Calu3 (cell line): ENCODE measurements at regions of chr5 and their contacts with region 1.

Region 1: DNA sequence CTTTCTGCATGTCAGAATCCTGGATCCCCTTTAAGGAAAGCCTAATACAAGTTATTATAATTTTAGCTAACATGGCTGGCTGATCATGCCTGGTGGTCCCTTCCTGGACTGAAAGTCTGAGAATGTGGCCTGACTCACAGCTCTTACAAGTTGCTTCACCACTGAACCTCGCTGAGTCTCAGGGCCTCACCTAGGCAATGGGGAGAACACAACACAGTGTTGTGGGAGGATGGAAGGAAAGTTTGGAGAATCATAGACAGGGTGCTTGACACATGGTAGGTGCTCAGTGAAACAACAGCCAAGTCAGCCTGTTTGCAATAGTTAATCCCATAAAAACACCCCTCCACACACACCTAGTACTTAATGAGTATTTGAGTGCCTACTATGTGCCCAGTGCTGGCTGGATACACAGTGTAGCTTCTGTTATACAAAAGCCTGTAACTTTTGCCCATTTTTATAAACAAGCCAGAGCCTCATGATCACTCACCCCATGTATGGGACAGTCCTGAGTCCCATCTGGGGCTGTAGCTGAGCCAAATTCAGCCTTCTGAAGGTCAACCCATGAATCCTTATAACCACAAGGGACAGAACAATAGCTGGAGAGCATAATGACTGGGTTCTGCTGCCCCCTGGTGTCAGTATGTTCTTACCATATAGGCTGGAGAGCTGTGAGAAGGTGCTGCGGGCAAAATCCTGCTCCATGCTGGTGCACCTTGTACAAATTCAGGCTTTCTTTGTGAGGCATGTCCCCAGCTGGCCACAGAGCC is 3.9 kb downstream of the ACSL6 start:
- DNase-seq: peak; percentile 91
- H3K4me3 Mint-ChIP-seq: no peak overlapping the region
- H3K27ac Mint-ChIP-seq: no peak overlapping the region
- H3K4me1 Mint-ChIP-seq: peaks cover 4% of the 10 kb centered on the region
- H3K27me3 Mint-ChIP-seq: peaks cover 29% of the 10 kb centered on the region
- CTCF ChIP-seq: peak; percentile 81

Region 2: DNA sequence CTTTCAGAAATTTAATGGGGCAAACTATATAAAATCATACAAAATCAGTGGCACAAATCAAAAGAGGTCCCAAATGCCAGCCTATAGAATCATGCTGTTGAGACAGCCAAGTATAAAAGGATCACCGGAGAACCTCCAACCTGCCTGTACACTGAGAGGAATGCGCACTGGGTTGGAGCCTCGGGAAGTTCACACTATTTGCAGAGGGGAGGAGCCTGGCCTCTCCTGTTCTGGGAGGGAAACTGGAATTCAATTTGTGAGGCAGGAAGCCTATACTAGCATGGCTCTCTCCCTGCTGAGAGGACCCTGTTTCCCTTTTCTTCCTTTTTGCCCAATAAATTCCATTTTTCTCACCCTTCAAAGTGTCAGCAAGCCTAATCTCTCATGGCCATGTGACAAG is 1248.5 kb before region 1 on chr5:
- CTCF ChIA-PET with region 1: no interaction called
- intact Hi-C with region 1: loop called (anchors 10 kb)
- DNase-seq: no peak
- H3K4me3 Mint-ChIP-seq: no peak overlapping the region
- H3K27ac Mint-ChIP-seq: no peak overlapping the region
- H3K4me1 Mint-ChIP-seq: no peaks in the 10 kb centered on the region
- H3K27me3 Mint-ChIP-seq: no peaks in the 10 kb centered on the region
- CTCF ChIP-seq: no peak

Region 3: GRCh38 chr5:131423056-131423455 is 584.5 kb before region 1 on chr5:
- CTCF ChIA-PET with region 1: interaction called, 10 read pairs
- intact Hi-C with region 1: loop called (anchors 1 kb)
- DNase-seq: no peak
- H3K4me3 Mint-ChIP-seq: no peak overlapping the region
- H3K27ac Mint-ChIP-seq: no peak overlapping the region
- H3K4me1 Mint-ChIP-seq: no peaks in the 10 kb centered on the region
- H3K27me3 Mint-ChIP-seq: no peaks in the 10 kb centered on the region
- CTCF ChIP-seq: peak; percentile 54

Region 4: DNA sequence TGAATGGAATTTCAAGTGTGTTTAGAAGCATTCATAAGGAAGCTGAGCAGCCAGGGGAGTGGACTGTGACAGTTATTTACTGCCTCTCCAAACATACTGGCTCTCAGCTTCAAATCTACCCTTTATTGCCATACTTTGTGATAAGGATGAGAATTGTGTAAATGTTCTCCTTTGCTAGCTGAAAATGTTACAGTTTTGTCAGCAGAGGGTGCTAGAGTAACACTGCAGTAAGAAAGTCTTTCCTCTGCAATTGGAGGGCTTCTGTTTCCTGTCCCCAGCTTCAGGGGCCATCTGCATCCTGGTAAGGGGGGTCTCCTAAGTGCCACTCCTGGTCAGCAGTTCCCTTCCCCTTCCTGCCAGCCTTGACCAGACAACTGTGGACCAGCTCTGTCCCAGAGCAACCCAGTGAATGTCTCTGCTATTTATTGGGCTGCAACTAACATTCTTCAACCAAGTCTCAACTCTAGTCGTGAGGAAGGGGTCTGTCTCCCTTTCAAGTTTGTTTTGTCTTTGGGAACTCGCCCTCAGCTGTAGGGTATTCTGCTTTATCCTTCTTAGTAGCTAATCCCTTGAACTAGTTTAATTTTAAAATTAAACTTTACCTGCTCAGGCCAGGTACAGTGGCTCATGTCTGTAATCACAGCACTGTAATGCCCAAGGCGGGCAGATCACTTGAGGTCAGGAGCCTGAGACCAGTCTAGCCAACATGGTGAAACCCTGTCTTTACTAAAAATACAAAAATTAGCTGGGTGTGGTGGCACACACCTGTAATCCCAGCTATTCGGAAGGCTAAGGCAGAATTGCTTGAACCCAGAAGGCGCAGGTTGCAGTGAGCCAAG is 417.9 kb before region 1 on chr5:
- CTCF ChIA-PET with region 1: interaction called, 23 read pairs
- intact Hi-C with region 1: loop called (anchors 1 kb)
- DNase-seq: peak; percentile 30
- H3K4me3 Mint-ChIP-seq: no peak overlapping the region
- H3K27ac Mint-ChIP-seq: no peak overlapping the region
- H3K4me1 Mint-ChIP-seq: peaks cover 24% of the 10 kb centered on the region
- H3K27me3 Mint-ChIP-seq: no peaks in the 10 kb centered on the region
- CTCF ChIP-seq: peak; percentile 86

Region 5: DNA sequence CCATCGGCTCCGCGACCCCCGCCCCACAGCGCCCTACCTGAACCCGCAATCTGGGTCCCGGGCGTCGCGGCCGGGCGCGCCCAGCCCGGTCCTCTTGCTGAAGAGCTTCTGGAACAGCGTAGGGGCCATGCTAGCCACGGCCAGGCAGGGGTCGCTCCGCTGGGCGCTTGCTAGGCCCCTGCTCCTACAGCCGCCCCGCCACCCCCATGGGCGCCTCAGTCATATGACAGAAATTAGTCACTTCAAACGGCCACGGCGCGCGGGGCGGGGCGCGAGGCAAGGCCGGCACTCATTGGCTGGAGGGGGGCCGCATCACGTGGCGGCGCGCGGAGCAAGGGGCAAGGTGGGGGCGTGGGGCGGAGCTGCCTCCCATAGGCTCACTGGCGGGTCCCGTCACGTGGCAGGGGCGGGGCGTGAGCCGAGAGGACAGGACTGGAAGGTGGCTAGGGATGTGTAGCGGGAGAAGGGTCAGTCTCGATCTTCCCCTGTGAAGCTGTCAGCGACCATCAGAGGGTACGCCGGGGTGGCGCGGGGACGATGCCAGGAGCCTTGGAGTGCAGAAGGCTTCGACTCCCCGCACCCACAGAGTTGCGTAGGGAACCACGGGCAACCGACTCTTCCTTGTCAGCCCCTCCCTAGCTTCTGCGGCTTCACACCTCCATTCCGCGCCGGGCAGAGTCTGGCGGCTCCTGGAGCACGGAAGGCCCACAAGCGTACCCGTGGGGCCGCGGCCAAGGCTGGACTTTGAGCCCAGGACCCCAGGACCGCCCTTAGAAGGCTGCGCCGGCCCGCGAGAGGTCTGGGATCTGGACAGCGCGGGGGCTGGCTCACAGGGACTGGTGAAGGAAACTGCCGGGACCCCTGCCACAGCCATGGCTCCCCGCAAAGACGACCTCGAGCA is 210.5 kb before region 1 on chr5 and contains the start of gene FNIP1:
- CTCF ChIA-PET with region 1: interaction called, 7 read pairs
- intact Hi-C with region 1: loop called (anchors 5 kb)
- DNase-seq: peak; percentile 100
- H3K4me3 Mint-ChIP-seq: peak within 1 kb of the TSS; percentile 95
- H3K27ac Mint-ChIP-seq: peak within 1 kb of the TSS; percentile 94
- H3K4me1 Mint-ChIP-seq: peaks cover 9% of the 10 kb centered on the region
- H3K27me3 Mint-ChIP-seq: no peaks in the 10 kb centered on the region
- CTCF ChIP-seq: no peak
- total RNA-seq, gene FNIP1: 46.0 and 46.5 TPM in 2 replicates

Region 6: GRCh38 chr5:131810510-131811249 is 196.9 kb before region 1 on chr5:
- CTCF ChIA-PET with region 1: interaction called, 19 read pairs
- intact Hi-C with region 1: loop called (anchors 1 kb)
- DNase-seq: peak; percentile 19
- H3K4me3 Mint-ChIP-seq: no peak overlapping the region
- H3K27ac Mint-ChIP-seq: no peak overlapping the region
- H3K4me1 Mint-ChIP-seq: peaks cover 10% of the 10 kb centered on the region
- H3K27me3 Mint-ChIP-seq: no peaks in the 10 kb centered on the region
- CTCF ChIP-seq: no peak

Region 7: GRCh38 chr5:131996207-131997025 is 11.2 kb before region 1 on chr5:
- CTCF ChIA-PET with region 1: interaction called, 10 read pairs
- intact Hi-C with region 1: no loop called
- DNase-seq: no peak
- H3K4me3 Mint-ChIP-seq: no peak overlapping the region
- H3K27ac Mint-ChIP-seq: peak overlapping the region; percentile 59
- H3K4me1 Mint-ChIP-seq: peaks cover 29% of the 10 kb centered on the region
- H3K27me3 Mint-ChIP-seq: peaks cover 27% of the 10 kb centered on the region
- CTCF ChIP-seq: no peak

Region 8: GRCh38 chr5:132064738-132065331 is 57.3 kb after region 1 on chr5:
- CTCF ChIA-PET with region 1: no interaction called
- intact Hi-C with region 1: no loop called
- DNase-seq: peak; percentile 90
- H3K4me3 Mint-ChIP-seq: no peak overlapping the region
- H3K27ac Mint-ChIP-seq: no peak overlapping the region
- H3K4me1 Mint-ChIP-seq: no peaks in the 10 kb centered on the region
- H3K27me3 Mint-ChIP-seq: no peaks in the 10 kb centered on the region
- CTCF ChIP-seq: peak; percentile 95

Region 9: DNA sequence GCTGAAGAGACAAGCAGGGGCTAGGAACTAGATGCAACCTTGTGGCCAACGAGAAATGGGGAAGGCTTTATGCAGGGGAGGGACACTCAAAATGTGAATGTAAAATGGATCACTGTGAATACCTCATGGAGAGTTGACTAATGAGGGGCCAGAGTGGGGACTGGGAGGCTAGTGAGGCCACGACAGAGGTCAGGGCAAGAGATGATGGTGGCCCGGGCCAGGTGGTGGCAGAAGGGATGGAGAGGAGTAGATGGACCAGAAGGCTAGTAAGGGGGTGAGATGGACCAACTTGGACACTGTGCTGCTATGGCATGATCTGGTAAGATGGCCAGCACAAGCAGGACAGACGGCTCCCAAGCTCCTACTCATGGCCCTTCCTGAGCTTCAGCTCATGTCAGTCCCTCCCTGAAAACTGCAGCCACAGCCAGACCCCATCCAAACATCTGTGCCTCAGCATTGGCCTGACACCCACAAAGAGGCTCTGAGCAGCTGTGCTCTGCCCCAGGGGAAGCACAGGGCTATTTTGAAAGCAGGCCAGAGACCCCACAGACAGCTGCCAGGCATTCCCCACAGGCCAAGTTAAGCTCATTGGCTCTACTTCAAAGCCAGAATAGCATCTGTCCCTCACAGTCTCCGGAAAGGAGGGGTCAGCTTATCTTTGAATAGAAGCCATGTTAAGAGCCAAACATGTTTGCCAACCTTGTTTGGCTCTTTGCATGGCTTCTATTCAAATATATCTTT is 198.0 kb after region 1 on chr5:
- CTCF ChIA-PET with region 1: no interaction called
- intact Hi-C with region 1: no loop called
- DNase-seq: no peak
- H3K4me3 Mint-ChIP-seq: no peak overlapping the region
- H3K27ac Mint-ChIP-seq: no peak overlapping the region
- H3K4me1 Mint-ChIP-seq: no peaks in the 10 kb centered on the region
- H3K27me3 Mint-ChIP-seq: no peaks in the 10 kb centered on the region
- CTCF ChIP-seq: no peak